A549 (cell line): ENCODE measurements at regions of chr17 and their contacts with region 1.

Region 1: DNA sequence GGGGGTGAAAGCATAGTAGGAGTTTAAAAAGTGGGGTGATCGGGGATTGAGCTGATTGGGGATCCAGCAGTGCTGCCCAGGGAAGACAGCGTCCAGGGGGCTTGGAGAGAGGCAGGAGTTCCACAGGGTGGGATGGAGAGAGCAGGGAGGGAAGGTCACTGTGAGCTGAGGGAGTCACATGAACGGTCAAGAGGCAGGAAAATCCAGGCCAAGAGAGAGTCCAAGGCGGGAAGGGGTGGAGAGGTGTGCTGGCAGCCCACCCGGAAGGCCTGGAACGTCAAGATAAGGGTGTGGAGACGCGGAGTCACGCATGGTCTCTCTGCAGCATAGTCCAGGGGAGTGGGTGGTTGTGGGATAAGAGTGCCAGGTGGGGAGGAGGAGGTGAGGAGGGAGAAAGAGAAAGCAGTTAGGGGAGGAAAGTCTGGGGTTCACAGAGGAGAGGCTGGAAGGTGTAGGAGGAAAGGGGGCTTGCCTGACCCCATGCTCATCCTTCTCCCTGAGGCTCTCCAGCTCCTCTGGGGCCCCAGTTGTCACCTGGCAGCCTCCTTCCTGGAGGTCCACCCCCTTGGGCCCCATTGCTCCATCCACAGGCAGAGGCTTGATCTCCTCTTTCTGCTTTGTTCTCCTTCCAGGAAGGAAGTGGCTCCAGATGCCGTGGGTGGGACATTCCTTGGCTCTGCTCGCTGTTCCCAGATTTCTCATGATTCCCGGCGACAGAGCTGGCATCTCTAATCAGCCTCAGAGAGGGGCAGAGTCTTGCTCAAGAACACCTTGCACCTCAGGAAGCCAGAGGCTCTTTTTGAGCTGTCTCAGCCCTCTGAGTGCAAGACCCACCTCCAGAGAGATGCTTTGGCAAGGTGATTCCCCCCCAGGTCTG is 28.7 kb downstream of the CCR7 start:
- DNase-seq: peak in 1 of 2 experiments; percentile 83
- ATAC-seq: peak in 1 of 2 experiments; percentile 5; a peak in 3 of 6 replicates
- H3K4me3 ChIP-seq: no peak overlapping the region
- H3K27ac ChIP-seq: peak overlapping the region; percentile 95 to 99
- H3K4me1 ChIP-seq: peaks cover 77% of the 10 kb centered on the region
- CTCF ChIP-seq: no peak
- EP300 ChIP-seq: peak; percentile 87 to 91; a peak in 3 of 5 replicates
- POLR2A ChIP-seq: no peak
- RAD21 ChIP-seq: no peak

Region 2: GRCh38 chr17:40362696-40363110 is 173.8 kb before region 1 on chr17:
- CTCF ChIA-PET with region 1: interaction called, 125 read pairs
- POLR2A ChIA-PET with region 1: interaction called, 12 read pairs
- DNase-seq: peak; percentile 93 to 97
- ATAC-seq: peak; percentile 83 to 86
- H3K4me3 ChIP-seq: peak overlapping the region; percentile 61
- H3K27ac ChIP-seq: peak overlapping the region; percentile 84 to 95
- H3K4me1 ChIP-seq: peaks cover 30% of the 10 kb centered on the region
- CTCF ChIP-seq: peak; percentile 85
- EP300 ChIP-seq: no peak
- POLR2A ChIP-seq: peak; percentile 74
- RAD21 ChIP-seq: peak; percentile 73 to 85

Region 3: DNA sequence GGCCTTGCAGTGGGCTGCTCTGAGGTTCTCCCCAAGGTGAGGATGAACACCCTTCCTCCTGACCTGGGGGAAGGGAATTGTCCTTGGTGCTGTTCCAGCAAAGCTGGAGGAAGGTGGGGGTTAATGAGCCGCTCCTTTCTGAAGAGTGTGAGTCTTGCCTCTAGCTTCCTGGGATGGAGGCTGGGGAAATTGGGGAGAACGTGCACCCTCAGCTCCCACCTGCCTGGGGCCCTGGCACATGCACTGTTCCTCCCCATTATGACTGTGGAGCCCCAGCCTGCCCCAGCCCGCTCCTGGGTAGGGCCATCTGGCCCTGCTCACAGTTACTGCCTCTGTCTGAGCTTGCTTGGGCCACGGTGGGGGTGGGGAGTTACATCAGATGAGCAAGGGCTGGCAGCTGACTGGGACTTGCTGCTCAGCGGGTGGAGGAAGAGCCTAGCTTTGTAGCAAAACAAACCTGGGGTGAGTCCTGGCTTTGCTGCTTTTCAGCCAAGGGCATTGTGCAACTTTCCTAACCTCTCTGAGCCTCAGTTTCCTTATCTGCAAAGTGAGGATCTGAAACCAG is 46.2 kb before region 1 on chr17:
- CTCF ChIA-PET with region 1: interaction called, 379 read pairs
- POLR2A ChIA-PET with region 1: interaction called, 42 read pairs
- DNase-seq: peak in 1 of 2 experiments; percentile 76
- ATAC-seq: peak in 1 of 2 experiments; percentile 1; a peak in 2 of 6 replicates
- H3K4me3 ChIP-seq: no peak overlapping the region
- H3K27ac ChIP-seq: peak overlapping the region; percentile 96 to 97
- H3K4me1 ChIP-seq: peaks cover 98% of the 10 kb centered on the region
- CTCF ChIP-seq: no peak
- EP300 ChIP-seq: 0 out of 5 replicates have a peak, but pooled peaks have one; percentile 1 to 15
- POLR2A ChIP-seq: no peak
- RAD21 ChIP-seq: no peak

Region 4: GRCh38 chr17:40516581-40517285 is 19.8 kb before region 1 on chr17:
- CTCF ChIA-PET with region 1: interaction called, 1,144 read pairs
- POLR2A ChIA-PET with region 1: no interaction called
- DNase-seq: peak; percentile 74 to 85
- ATAC-seq: peak in 1 of 2 experiments; percentile 1; a peak in 2 of 6 replicates
- H3K4me3 ChIP-seq: no peak overlapping the region
- H3K27ac ChIP-seq: peak overlapping the region; percentile 97 to 99
- H3K4me1 ChIP-seq: peaks cover 74% of the 10 kb centered on the region
- CTCF ChIP-seq: no peak
- EP300 ChIP-seq: peak; percentile 69 to 92; a peak in 3 of 5 replicates
- POLR2A ChIP-seq: no peak
- RAD21 ChIP-seq: peak in 1 of 2 experiments; percentile 18; a peak in 1 of 5 replicates

Region 5: GRCh38 chr17:40551879-40552768 is 15.6 kb after region 1 on chr17:
- CTCF ChIA-PET with region 1: interaction called, 1,144 read pairs
- POLR2A ChIA-PET with region 1: interaction called, 114 read pairs
- DNase-seq: peak; percentile 95 to 99
- ATAC-seq: peak; percentile 51 to 75
- H3K4me3 ChIP-seq: peak overlapping the region; percentile 17; the same call in 2 of the 3 replicates
- H3K27ac ChIP-seq: peak overlapping the region; percentile 95 to 99
- H3K4me1 ChIP-seq: peaks cover 84% of the 10 kb centered on the region
- CTCF ChIP-seq: no peak
- EP300 ChIP-seq: peak; percentile 100
- POLR2A ChIP-seq: no peak
- RAD21 ChIP-seq: peak; percentile 43 to 62